Activated naive CD4-positive, alpha-beta T cell treated with anti-CD3 and anti-CD28 coated beads, Interleukin-2, amount 10 ng/mL, durations not matched to agents 7 days and 5 days (primary cell): ENCODE measurements at regions of chr19 and their contacts with region 1.

Region 1: DNA sequence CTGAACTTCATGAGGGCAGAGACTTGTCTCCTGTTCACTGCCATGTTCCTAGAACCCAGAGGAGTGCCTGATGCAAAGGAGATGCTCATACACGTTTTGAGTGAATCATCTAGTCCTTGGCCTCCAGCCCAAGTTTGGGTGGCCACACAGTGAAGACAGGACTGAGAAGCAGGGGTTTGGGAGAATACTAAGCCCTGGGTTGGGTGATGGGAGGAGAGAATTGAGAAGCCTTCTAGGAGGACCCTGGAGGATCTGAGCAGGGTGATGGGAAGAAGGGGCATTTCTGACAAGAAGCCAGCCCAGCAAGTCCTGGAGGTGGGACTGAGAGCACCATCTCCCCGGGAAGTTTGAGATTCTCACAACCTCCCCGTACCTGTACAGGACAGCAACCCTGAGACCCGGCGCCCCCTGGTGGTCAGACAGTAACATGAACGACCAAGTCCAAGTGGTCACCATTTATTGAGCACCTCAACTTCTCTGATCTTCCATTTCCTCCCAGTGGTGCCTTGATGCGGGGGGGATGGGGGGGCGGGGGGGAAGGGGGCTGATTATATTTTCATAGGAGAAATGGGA is 11.0 kb downstream of the CTU1 start:
- DNase-seq: peak; percentile 76
- H3K4me3 Mint-ChIP-seq: peak overlapping the region; percentile 37
- H3K27ac Mint-ChIP-seq: peak overlapping the region; percentile 47
- H3K4me1 Mint-ChIP-seq: peaks cover 26% of the 10 kb centered on the region
- H3K27me3 Mint-ChIP-seq: no peaks in the 10 kb centered on the region

Region 2: GRCh38 chr19:51020988-51021651 is 76.1 kb before region 1 on chr19:
- CTCF ChIA-PET with region 1: interaction called, 26 read pairs
- DNase-seq: peak; percentile 33
- H3K4me3 Mint-ChIP-seq: no peak overlapping the region
- H3K27ac Mint-ChIP-seq: no peak overlapping the region
- H3K4me1 Mint-ChIP-seq: peaks cover 22% of the 10 kb centered on the region
- H3K27me3 Mint-ChIP-seq: peaks cover 87% of the 10 kb centered on the region